Calu3 (cell line): ENCODE measurements at regions of chr3 and their contacts with region 1.

Region 1: GRCh38 chr3:8663177-8664061 is 18.8 kb upstream of the SSUH2 start:
- DNase-seq: peak; percentile 87
- H3K4me3 Mint-ChIP-seq: no peak overlapping the region
- H3K27ac Mint-ChIP-seq: no peak overlapping the region
- H3K4me1 Mint-ChIP-seq: peaks cover 31% of the 10 kb centered on the region
- H3K27me3 Mint-ChIP-seq: peaks cover 18% of the 10 kb centered on the region
- CTCF ChIP-seq: peak; percentile 57

Region 2: DNA sequence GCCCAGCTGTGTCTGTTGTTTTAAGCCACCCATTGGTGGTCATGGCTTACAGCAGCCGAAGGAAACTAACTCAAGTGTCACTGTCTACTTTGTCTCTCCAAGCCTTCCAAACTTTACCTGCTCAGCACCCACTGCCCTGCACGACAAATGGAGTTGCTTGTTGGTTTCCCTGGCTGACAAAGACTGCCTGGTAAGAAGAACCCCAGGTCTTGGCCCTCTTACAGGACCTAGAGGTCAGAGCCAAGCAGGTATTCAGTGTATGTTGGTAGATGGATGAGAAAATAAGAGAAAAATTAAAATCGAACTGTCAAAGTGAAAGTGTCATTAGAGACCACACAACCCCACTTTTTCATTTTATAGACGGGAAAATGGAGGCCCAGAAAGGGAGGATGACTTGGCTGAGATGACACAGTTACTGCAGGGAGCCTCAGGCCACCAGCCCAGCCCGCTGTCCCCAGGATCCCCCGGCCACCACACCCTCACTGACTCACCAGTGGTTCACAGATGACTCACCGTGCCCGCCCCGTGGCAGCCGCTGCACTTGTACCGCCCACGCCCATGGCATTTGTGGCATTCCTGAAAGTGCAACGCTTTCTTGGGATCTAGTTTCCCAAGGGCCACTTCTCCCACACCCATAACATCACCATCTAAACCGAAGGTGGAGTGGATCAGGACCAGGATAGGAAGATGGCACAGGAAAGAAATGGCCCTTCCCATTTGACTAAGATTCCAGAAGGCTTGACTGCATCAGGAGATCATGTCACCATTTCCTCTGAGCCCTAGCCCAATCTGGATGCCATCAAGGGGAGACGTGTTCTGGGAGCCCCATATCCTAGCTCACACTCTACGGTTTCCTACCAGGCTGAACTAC is 34.0 kb before region 1 on chr3:
- CTCF ChIA-PET with region 1: interaction called, 3 read pairs
- intact Hi-C with region 1: loop called (anchors 1 kb)
- DNase-seq: peak; percentile 94
- H3K4me3 Mint-ChIP-seq: no peak overlapping the region
- H3K27ac Mint-ChIP-seq: peak overlapping the region; percentile 77
- H3K4me1 Mint-ChIP-seq: peaks cover 39% of the 10 kb centered on the region
- H3K27me3 Mint-ChIP-seq: no peaks in the 10 kb centered on the region
- CTCF ChIP-seq: no peak

Region 3: GRCh38 chr3:8769088-8769822 is 105.8 kb after region 1 on chr3 and contains the start of gene OXTR:
- CTCF ChIA-PET with region 1: interaction called, 4 read pairs
- intact Hi-C with region 1: loop called (anchors 2 kb)
- DNase-seq: peak; percentile 85
- H3K4me3 Mint-ChIP-seq: peak within 1 kb of the TSS; percentile 75
- H3K27ac Mint-ChIP-seq: peak within 1 kb of the TSS; percentile 46
- H3K4me1 Mint-ChIP-seq: peaks cover 6% of the 10 kb centered on the region
- H3K27me3 Mint-ChIP-seq: peaks cover 13% of the 10 kb centered on the region
- CTCF ChIP-seq: peak; percentile 96
- total RNA-seq, gene OXTR: 2.8 and 3.4 TPM in 2 replicates

Region 4: DNA sequence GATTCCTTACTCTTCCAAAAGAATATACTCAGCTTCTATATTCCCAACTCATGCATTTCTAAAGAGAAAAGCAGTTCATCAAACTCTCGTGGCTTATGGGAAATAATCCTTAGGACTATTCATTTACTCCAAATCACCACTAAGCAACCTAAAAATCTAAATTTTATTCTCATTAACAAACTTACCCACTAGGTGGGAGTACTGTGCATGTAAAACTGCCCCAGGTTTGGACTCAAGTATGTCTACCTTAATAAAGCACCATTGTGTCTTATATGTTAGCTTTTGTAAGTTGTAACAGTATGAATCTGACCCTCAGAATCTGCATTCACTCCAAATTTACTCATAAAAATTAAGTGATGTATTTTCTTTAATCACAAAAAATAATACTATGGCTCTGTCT is 274.6 kb after region 1 on chr3:
- CTCF ChIA-PET with region 1: no interaction called
- intact Hi-C with region 1: loop called (anchors 10 kb)
- DNase-seq: no peak
- H3K4me3 Mint-ChIP-seq: no peak overlapping the region
- H3K27ac Mint-ChIP-seq: peak overlapping the region; percentile 69
- H3K4me1 Mint-ChIP-seq: peaks cover 25% of the 10 kb centered on the region
- H3K27me3 Mint-ChIP-seq: no peaks in the 10 kb centered on the region
- CTCF ChIP-seq: no peak